Common myeloid progenitor, CD34-positive (primary cell): ENCODE measurements at regions of chr3 and their contacts with region 1.

Region 1: GRCh38 chr3:185659942-185660921 is 74.1 kb downstream of the SENP2 start:
- DNase-seq: peak; percentile 81 to 90 (median 88)
- H3K4me3 ChIP-seq: no peak overlapping the region
- H3K27ac ChIP-seq: no peak overlapping the region
- H3K4me1 ChIP-seq: peaks cover 0 to 4% (median 0%) of the 10 kb centered on the region in 4 experiments
- H3K27me3 ChIP-seq: no peaks in the 10 kb centered on the region

Region 2: GRCh38 chr3:185176750-185177359 is 483.4 kb before region 1 on chr3:
- CTCF ChIA-PET with region 1: no interaction called
- POLR2A ChIA-PET with region 1: no interaction called
- DNase-seq: peak; percentile 45 to 70 (median 57)
- H3K4me3 ChIP-seq: no peak overlapping the region
- H3K27ac ChIP-seq: no peak overlapping the region
- H3K4me1 ChIP-seq: peaks cover 3 to 9% (median 7%) of the 10 kb centered on the region in 4 experiments
- H3K27me3 ChIP-seq: peaks cover 0 to 2% (median 0%) of the 10 kb centered on the region in 5 experiments

Region 3: GRCh38 chr3:185552358-185552877 is 107.8 kb before region 1 on chr3 and contains the start of gene LIPH:
- CTCF ChIA-PET with region 1: no interaction called
- POLR2A ChIA-PET with region 1: no interaction called
- DNase-seq: peak in 1 of 3 donors; percentile 13
- H3K4me3 ChIP-seq: no peak within 1 kb of the TSS
- H3K27ac ChIP-seq: peak within 1 kb of the TSS in 1 of 2 experiments; percentile 1
- H3K4me1 ChIP-seq: peaks cover 0 to 2% (median 0%) of the 10 kb centered on the region in 4 experiments
- H3K27me3 ChIP-seq: no peaks in the 10 kb centered on the region

Region 4: GRCh38 chr3:185582866-185583265 is 77.4 kb before region 1 on chr3:
- CTCF ChIA-PET with region 1: no interaction called
- POLR2A ChIA-PET with region 1: no interaction called
- DNase-seq: peak; percentile 50 to 81 (median 79)
- H3K4me3 ChIP-seq: peak overlapping the region in 1 of 7 experiments; percentile 20
- H3K27ac ChIP-seq: no peak overlapping the region
- H3K4me1 ChIP-seq: peaks cover 7 to 30% (median 24%) of the 10 kb centered on the region in 4 experiments
- H3K27me3 ChIP-seq: no peaks in the 10 kb centered on the region

Region 5: GRCh38 chr3:185645596-185646381 is 14.4 kb before region 1 on chr3:
- CTCF ChIA-PET with region 1: interaction called, 19 read pairs
- POLR2A ChIA-PET with region 1: no interaction called
- DNase-seq: no peak
- H3K4me3 ChIP-seq: no peak overlapping the region
- H3K27ac ChIP-seq: no peak overlapping the region
- H3K4me1 ChIP-seq: peaks cover 0 to 3% (median under 1%) of the 10 kb centered on the region in 4 experiments
- H3K27me3 ChIP-seq: no peaks in the 10 kb centered on the region

Region 6: GRCh38 chr3:185733980-185734724 is 73.9 kb after region 1 on chr3:
- CTCF ChIA-PET with region 1: interaction called, 11 read pairs
- POLR2A ChIA-PET with region 1: no interaction called
- DNase-seq: peak; percentile 78 to 82 (median 82)
- H3K4me3 ChIP-seq: no peak overlapping the region
- H3K27ac ChIP-seq: no peak overlapping the region
- H3K4me1 ChIP-seq: peaks cover 0 to 25% (median 18%) of the 10 kb centered on the region in 4 experiments
- H3K27me3 ChIP-seq: no peaks in the 10 kb centered on the region

Region 7: DNA sequence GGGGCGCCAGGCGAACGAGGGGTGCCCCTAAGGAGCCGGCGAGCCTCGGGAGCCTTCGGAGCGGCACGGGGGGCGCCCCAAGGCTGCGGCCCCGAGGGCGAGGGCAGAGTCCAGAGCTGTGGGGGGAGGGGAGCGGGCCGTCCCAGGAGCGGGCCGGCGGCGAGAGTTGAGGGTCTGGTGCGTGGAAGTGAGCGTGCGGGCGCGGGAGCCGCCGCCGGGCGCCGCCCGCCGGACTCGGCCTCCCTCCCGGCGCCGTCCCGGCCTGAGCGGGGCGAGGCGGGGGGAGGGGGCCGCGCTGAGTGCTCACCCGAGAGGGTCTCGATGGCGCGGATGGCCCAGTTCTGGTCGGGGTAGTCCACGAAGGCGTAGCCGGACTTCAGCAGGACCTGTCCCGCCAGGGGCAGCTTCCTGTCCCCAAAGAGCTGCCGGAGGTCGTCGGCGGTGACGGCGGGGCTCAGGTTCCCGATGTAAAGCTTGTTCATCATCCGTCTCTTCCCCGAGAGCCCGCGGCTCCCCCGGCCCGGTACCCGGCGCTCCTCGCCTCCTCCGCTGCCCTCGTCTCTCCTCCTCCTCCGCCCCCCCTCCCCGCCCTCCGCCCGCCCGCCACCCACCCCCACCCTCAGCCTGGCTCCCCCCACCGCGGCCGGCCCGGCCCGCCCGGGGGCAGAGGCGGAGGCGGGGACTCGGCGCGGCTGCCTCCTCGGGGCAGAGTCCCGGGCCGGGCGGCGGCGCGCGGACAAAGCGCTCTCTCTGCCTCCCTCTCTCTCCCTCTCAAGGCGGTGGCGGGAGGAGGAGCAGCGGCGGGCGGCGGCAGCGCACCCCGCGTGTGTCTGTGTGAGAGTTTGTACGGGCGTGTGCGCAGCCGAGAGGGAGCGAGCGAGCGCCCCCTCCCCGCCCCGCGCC is 164.5 kb after region 1 on chr3 and contains the start of gene IGF2BP2:
- CTCF ChIA-PET with region 1: interaction called, 14 read pairs
- POLR2A ChIA-PET with region 1: interaction called, 3 read pairs
- DNase-seq: peak; percentile 85 to 94 (median 89)
- H3K4me3 ChIP-seq: peak within 1 kb of the TSS; percentile 79 to 98 (median 94)
- H3K27ac ChIP-seq: peak within 1 kb of the TSS; percentile 75 to 90
- H3K4me1 ChIP-seq: peaks cover 13 to 41% (median 27%) of the 10 kb centered on the region in 4 experiments
- H3K27me3 ChIP-seq: no peaks in the 10 kb centered on the region

Region 8: GRCh38 chr3:185942907-185943759 is 282.9 kb after region 1 on chr3:
- CTCF ChIA-PET with region 1: interaction called, 12 read pairs
- POLR2A ChIA-PET with region 1: no interaction called
- DNase-seq: peak; percentile 81 to 90 (median 87)
- H3K4me3 ChIP-seq: peak overlapping the region in 6 of 7 experiments; percentile 25 to 67 (median 46)
- H3K27ac ChIP-seq: no peak overlapping the region
- H3K4me1 ChIP-seq: peaks cover 4 to 13% (median 10%) of the 10 kb centered on the region in 4 experiments
- H3K27me3 ChIP-seq: no peaks in the 10 kb centered on the region